Gastrocnemius medialis (tissue), 4 donors: ENCODE measurements at regions of chr12 and their contacts with region 1.

Region 1: DNA sequence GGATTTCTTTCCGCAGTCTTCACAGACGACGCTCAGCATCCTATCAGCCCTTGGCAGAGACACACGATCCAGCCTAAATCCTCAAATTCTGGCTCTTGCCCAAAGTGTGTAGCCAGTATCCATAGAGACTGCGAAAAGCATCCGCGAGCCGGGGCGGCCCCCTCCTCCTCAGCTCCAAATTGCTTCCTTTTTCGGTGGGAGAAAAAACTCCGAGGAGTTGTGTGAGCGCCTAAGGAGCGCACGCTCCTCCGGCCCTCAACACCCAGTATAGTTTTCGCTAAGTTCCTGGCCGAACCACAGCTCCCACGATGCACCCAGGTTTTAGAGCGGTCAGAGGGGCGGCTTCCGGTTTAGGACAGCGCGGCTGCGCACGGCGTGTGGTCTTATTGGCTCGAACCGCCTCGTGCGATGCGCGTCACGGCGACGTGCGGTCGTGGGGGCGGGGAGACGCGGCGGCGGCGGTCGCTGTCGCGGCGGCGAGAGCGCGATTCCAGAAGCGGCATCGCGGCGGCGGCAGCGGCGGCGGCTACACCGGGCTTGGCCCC is at the start of gene ADIPOR2:
- DNase-seq: peak; percentile 92 to 93
- ATAC-seq: peak; percentile 96 to 97
- H3K4me3 ChIP-seq: peak within 1 kb of the TSS; percentile 86 to 98 (median 94)
- H3K27ac ChIP-seq: peak within 1 kb of the TSS; percentile 96 to 97 (median 96)
- H3K4me1 ChIP-seq: peaks cover 27 to 33% of the 10 kb centered on the region in 2 donors
- H3K27me3 ChIP-seq: no peaks in the 10 kb centered on the region
- CTCF ChIP-seq: no peak
- POLR2A ChIP-seq: peak; percentile 78 to 88
- total RNA-seq, gene ADIPOR2: 18.9 to 47.4 (median 25.1) TPM

Region 2: GRCh38 chr12:1661553-1662335 is 28.9 kb before region 1 on chr12:
- in situ Hi-C with region 1: no loop called
- intact Hi-C with region 1: loop called (anchors 2 kb)
- DNase-seq: peak; percentile 80 to 85
- ATAC-seq: peak; percentile 56 to 65
- H3K4me3 ChIP-seq: peak overlapping the region; percentile 49 to 75 (median 67)
- H3K27ac ChIP-seq: peak overlapping the region; percentile 81 to 90 (median 90)
- H3K4me1 ChIP-seq: peaks cover 25 to 43% of the 10 kb centered on the region in 2 donors
- H3K27me3 ChIP-seq: peaks cover 0 to 3% (median 0%) of the 10 kb centered on the region in 3 donors
- CTCF ChIP-seq: no peak
- POLR2A ChIP-seq: peak; percentile 57 to 69